GM12878 (cell line): ENCODE measurements at regions of chr12 and their contacts with region 1.

Region 1: GRCh38 chr12:119544765-119545625 is 48.6 kb upstream of the TMEM233 start:
- DNase-seq: peak; percentile 8
- ATAC-seq: peak; percentile 89
- H3K4me3 ChIP-seq: no peak overlapping the region
- H3K27ac ChIP-seq: no peak overlapping the region
- H3K4me1 ChIP-seq: no peaks in the 10 kb centered on the region
- H3K27me3 ChIP-seq: no peaks in the 10 kb centered on the region; a peak in 1 of 4 replicates
- CTCF ChIP-seq: peak; percentile 72 to 89 (median 79)
- EP300 ChIP-seq: no peak
- POLR2A ChIP-seq: no peak
- RAD21 ChIP-seq: peak; percentile 81

Region 2: GRCh38 chr12:118120579-118121363 is 1424.2 kb before region 1 on chr12:
- CTCF ChIA-PET with region 1: no interaction called
- POLR2A ChIA-PET with region 1: no interaction called
- RAD21 ChIA-PET with region 1: no interaction called
- SMC1A ChIA-PET with region 1: no interaction called
- in situ Hi-C with region 1: loop called (anchors 25 kb)
- intact Hi-C with region 1: no loop called
- DNase-seq: no peak
- ATAC-seq: peak; percentile 97
- H3K4me3 ChIP-seq: no peak overlapping the region
- H3K27ac ChIP-seq: peak overlapping the region; percentile 83
- H3K4me1 ChIP-seq: no peaks in the 10 kb centered on the region; the same call in 1 of the 2 replicates
- H3K27me3 ChIP-seq: no peaks in the 10 kb centered on the region
- CTCF ChIP-seq: peak; percentile 50 to 70 (median 64)
- EP300 ChIP-seq: no peak
- POLR2A ChIP-seq: no peak
- RAD21 ChIP-seq: peak; percentile 70

Region 3: GRCh38 chr12:118979763-118980406 is 565.1 kb before region 1 on chr12:
- CTCF ChIA-PET with region 1: interaction called, 3 read pairs
- POLR2A ChIA-PET with region 1: no interaction called
- RAD21 ChIA-PET with region 1: no interaction called
- SMC1A ChIA-PET with region 1: no interaction called
- in situ Hi-C with region 1: no loop called
- intact Hi-C with region 1: loop called (anchors 5 kb)
- DNase-seq: no peak
- ATAC-seq: peak; percentile 76
- H3K4me3 ChIP-seq: no peak overlapping the region
- H3K27ac ChIP-seq: no peak overlapping the region
- H3K4me1 ChIP-seq: no peaks in the 10 kb centered on the region
- H3K27me3 ChIP-seq: peaks cover 1 to 7% of the 10 kb centered on the region in 2 experiments; a peak in 1 of 4 replicates
- CTCF ChIP-seq: peak; percentile 59 to 80 (median 78)
- EP300 ChIP-seq: no peak
- POLR2A ChIP-seq: no peak
- RAD21 ChIP-seq: peak; percentile 70

Region 4: DNA sequence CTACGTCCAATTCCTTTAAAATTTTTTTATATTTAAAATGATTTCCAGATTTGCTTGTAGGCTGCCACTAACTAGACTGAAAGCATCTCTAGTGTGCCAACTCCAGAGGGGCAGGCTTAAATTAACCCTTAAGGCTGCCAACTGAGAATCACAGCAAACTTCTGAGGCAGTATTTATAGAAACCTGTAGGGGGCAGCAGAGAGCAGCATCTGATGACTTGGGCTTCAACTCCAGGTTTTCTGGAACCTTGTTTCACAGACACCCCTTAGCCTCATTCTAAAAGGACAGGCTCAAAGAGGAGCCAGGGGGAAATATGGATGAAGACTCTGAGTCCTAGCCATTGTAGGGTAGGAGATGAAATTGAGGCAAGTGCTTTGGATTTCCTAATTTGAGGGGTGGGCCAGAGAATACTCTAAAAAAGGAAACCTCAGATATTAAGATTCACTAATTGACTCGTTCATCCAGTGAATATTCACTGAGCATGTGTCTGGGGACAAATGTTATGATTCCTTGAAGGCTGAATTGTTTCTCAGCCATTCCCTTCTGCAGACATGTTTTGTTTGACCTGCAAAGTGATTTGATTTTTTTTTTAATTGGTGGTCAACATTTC is 429.6 kb before region 1 on chr12:
- CTCF ChIA-PET with region 1: no interaction called
- POLR2A ChIA-PET with region 1: no interaction called
- RAD21 ChIA-PET with region 1: no interaction called
- SMC1A ChIA-PET with region 1: no interaction called
- in situ Hi-C with region 1: no loop called
- intact Hi-C with region 1: loop called (anchors 10 kb)
- DNase-seq: no peak
- ATAC-seq: peak; percentile 51
- H3K4me3 ChIP-seq: no peak overlapping the region
- H3K27ac ChIP-seq: no peak overlapping the region
- H3K4me1 ChIP-seq: no peaks in the 10 kb centered on the region
- H3K27me3 ChIP-seq: no peaks in the 10 kb centered on the region; a peak in 1 of 4 replicates
- CTCF ChIP-seq: peak; percentile 66 to 81 (median 77)
- EP300 ChIP-seq: no peak
- POLR2A ChIP-seq: no peak
- RAD21 ChIP-seq: peak; percentile 53

Region 5: DNA sequence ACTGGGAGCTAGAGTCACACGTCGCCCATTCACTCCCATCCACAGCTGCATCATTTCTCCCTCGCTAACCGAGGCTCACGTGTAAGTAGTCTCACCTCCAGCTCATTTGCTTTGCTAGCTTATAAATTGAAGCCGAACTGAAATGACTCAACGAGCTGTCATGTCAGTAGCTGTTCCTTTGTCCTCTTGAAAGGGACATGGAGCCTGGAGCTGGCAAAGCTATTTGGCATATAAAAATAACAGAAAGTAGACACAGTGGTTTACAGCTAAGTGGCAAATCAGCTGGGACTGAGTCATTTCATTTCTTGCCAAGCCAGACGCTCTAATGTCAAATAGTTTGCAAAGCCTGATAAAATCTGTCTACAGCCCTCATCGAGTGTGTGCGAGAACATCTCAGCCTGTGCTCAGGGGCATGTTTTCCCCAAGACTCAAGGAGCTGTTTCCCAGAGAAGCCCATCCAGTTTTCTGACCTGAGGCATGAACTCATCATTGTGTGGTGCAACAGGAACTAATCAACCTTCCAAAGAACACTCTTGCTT is 65.8 kb before region 1 on chr12:
- CTCF ChIA-PET with region 1: no interaction called
- POLR2A ChIA-PET with region 1: no interaction called
- RAD21 ChIA-PET with region 1: no interaction called
- SMC1A ChIA-PET with region 1: no interaction called
- in situ Hi-C with region 1: no loop called
- intact Hi-C with region 1: no loop called
- DNase-seq: no peak
- ATAC-seq: no peak
- H3K4me3 ChIP-seq: no peak overlapping the region
- H3K27ac ChIP-seq: no peak overlapping the region
- H3K4me1 ChIP-seq: no peaks in the 10 kb centered on the region
- H3K27me3 ChIP-seq: no peaks in the 10 kb centered on the region
- CTCF ChIP-seq: no peak
- EP300 ChIP-seq: no peak
- POLR2A ChIP-seq: no peak
- RAD21 ChIP-seq: no peak